ENCODE measurements at regions of chr14 and their contacts with region 1.

Region 1: GRCh38 chr14:104137297-104138097 is 890 bp upstream of the KIF26A start:
- DNase-seq: peak; percentile 27 to 81 (median 53)
- ATAC-seq: peak; percentile 61
- H3K4me3 ChIP-seq: peak overlapping the region in 1 of 2 experiments; percentile 52
- H3K4me3 Mint-ChIP-seq: peak overlapping the region; percentile 69
- H3K27ac ChIP-seq: no peak overlapping the region
- H3K27ac Mint-ChIP-seq: no peak overlapping the region
- H3K4me1 ChIP-seq: peaks cover 14% of the 10 kb centered on the region
- H3K4me1 Mint-ChIP-seq: peaks cover 3% of the 10 kb centered on the region
- H3K27me3 ChIP-seq: peaks cover 10 to 19% of the 10 kb centered on the region in 2 experiments
- H3K27me3 Mint-ChIP-seq: peaks cover 19% of the 10 kb centered on the region
- CTCF ChIP-seq: peak; percentile 70

Region 2: DNA sequence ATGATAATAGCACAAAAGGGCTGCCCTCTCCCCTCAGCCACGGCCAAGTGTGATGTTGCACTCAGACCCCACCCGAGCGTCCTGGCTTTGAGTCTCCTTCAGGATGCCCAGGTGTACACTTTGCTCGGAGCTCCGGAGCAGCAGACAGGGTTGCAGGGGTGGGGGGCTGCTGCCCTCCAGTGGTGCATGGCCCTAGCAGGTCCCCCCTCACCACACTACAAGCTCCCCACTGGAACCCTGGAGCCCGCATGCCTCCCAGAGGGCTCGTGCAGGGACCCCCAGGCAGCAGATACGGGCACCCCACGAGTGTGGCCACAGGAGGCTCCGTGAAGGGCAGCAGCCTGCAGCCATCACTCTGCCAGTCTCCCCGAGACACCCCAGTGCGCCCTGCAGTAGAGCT is 372.2 kb after region 1 on chr14:
- CTCF ChIA-PET with region 1: interaction called, 7 read pairs
- POLR2A ChIA-PET with region 1: no interaction called
- intact Hi-C with region 1: loop called in 1 of 2 experiments (anchors 2 kb)
- DNase-seq: peak in 3 of 9 experiments; percentile 14 to 45 (median 26)
- ATAC-seq: no peak
- H3K4me3 ChIP-seq: no peak overlapping the region
- H3K4me3 Mint-ChIP-seq: no peak overlapping the region
- H3K27ac ChIP-seq: no peak overlapping the region
- H3K27ac Mint-ChIP-seq: no peak overlapping the region
- H3K4me1 ChIP-seq: no peaks in the 10 kb centered on the region
- H3K4me1 Mint-ChIP-seq: no peaks in the 10 kb centered on the region
- H3K27me3 ChIP-seq: no peaks in the 10 kb centered on the region
- H3K27me3 Mint-ChIP-seq: peaks cover 8% of the 10 kb centered on the region
- CTCF ChIP-seq: no peak

Region 3: DNA sequence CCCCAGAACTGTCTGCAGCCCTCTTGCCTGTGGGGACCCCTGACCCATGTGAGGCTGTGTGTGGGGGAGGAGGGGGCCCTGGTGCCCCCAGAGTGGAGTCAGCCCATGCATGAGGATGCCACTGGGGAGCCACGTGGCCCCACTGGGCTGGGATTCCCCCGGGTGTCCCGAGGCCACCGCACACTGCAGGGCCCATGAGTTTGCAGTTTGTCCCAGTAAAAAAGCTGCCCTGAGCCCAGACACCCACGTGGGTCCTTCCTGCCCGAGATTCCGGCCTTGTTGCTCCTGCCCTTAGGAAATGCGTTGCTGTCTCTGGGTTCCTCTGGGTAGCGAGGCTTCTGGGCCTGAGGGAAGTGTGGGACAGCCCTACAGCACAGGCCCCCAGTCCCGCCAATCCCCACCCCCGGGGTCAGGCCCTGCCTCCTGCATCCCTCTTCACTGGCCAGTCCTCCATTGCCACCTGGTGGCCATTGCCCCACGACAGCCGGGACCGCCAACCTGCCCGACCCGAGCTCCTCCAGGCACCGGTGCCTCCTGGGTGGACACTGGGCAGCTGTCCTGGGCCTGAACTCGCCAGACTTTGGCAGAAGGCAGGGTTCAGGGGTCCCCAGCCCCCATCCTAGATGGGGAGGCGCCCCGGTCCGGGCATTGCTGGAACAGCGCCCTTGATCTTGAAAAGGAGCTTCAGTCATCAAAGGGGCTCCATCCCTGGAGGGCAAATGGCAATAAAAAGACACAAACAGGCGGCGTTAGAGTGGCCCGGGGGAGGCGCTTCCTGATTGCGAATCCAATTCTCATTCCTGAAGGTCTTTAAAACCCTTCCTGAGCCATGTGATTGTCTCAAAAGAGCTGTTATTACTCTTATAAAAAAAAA is 426.5 kb after region 1 on chr14:
- CTCF ChIA-PET with region 1: interaction called, 23 read pairs
- POLR2A ChIA-PET with region 1: interaction called, 3 read pairs
- intact Hi-C with region 1: loop called in 1 of 2 experiments (anchors 1 kb)
- DNase-seq: peak; percentile 48 to 82 (median 71)
- ATAC-seq: peak; percentile 71
- H3K4me3 ChIP-seq: no peak overlapping the region
- H3K4me3 Mint-ChIP-seq: no peak overlapping the region
- H3K27ac ChIP-seq: no peak overlapping the region
- H3K27ac Mint-ChIP-seq: no peak overlapping the region
- H3K4me1 ChIP-seq: no peaks in the 10 kb centered on the region
- H3K4me1 Mint-ChIP-seq: no peaks in the 10 kb centered on the region
- H3K27me3 ChIP-seq: peaks cover 0 to 3% of the 10 kb centered on the region in 2 experiments
- H3K27me3 Mint-ChIP-seq: peaks cover 15% of the 10 kb centered on the region
- CTCF ChIP-seq: peak; percentile 72

Region 4: GRCh38 chr14:104639889-104640548 is 502.5 kb after region 1 on chr14:
- CTCF ChIA-PET with region 1: no interaction called
- POLR2A ChIA-PET with region 1: no interaction called
- intact Hi-C with region 1: loop called in 1 of 2 experiments (anchors 1 kb)
- DNase-seq: peak in 5 of 9 experiments; percentile 32 to 62 (median 53)
- ATAC-seq: peak; percentile 51
- H3K4me3 ChIP-seq: no peak overlapping the region
- H3K4me3 Mint-ChIP-seq: no peak overlapping the region
- H3K27ac ChIP-seq: no peak overlapping the region
- H3K27ac Mint-ChIP-seq: no peak overlapping the region
- H3K4me1 ChIP-seq: peaks cover 6% of the 10 kb centered on the region
- H3K4me1 Mint-ChIP-seq: no peaks in the 10 kb centered on the region
- H3K27me3 ChIP-seq: peaks cover 8 to 9% of the 10 kb centered on the region in 2 experiments
- H3K27me3 Mint-ChIP-seq: peaks cover 7% of the 10 kb centered on the region
- CTCF ChIP-seq: peak; percentile 58